Tibial artery (tissue), 4 donors: ENCODE measurements at regions of chr6 and their contacts with region 1.

Region 1: GRCh38 chr6:43013843-43014433 is at the starts of genes KLHDC3 and MEA1:
- DNase-seq: peak; percentile 99 to 100
- H3K4me3 ChIP-seq: peak within 1 kb of the TSS; percentile 71 to 83
- H3K27ac ChIP-seq: peak within 1 kb of the TSS; percentile 86 to 89
- H3K4me1 ChIP-seq: peaks cover 0 to 49% (median 41%) of the 10 kb centered on the region in 4 donors
- H3K27me3 ChIP-seq: no peaks in the 10 kb centered on the region
- CTCF ChIP-seq: no peak

Region 2: GRCh38 chr6:42928986-42929820 is 84.7 kb before region 1 on chr6 and contains the start of gene CNPY3:
- intact Hi-C with region 1: loop called (anchors 5 kb)
- DNase-seq: peak; percentile 95 to 97
- H3K4me3 ChIP-seq: peak within 1 kb of the TSS; percentile 81 to 88
- H3K27ac ChIP-seq: peak within 1 kb of the TSS; percentile 80 to 88
- H3K4me1 ChIP-seq: peaks cover 0 to 36% (median 21%) of the 10 kb centered on the region in 4 donors
- H3K27me3 ChIP-seq: peaks cover 0 to 11% of the 10 kb centered on the region in 2 donors
- CTCF ChIP-seq: peak in 1 of 2 experiments; percentile 28

Region 3: GRCh38 chr6:43053545-43054205 is 39.7 kb after region 1 on chr6 and contains the start of gene CUL7:
- intact Hi-C with region 1: loop called (anchors 5 kb)
- DNase-seq: peak; percentile 93 to 96
- H3K4me3 ChIP-seq: peak within 1 kb of the TSS; percentile 64
- H3K27ac ChIP-seq: peak within 1 kb of the TSS; percentile 86 to 95
- H3K4me1 ChIP-seq: peaks cover 3 to 31% (median 18%) of the 10 kb centered on the region in 4 donors
- H3K27me3 ChIP-seq: no peaks in the 10 kb centered on the region
- CTCF ChIP-seq: no peak

Region 4: DNA sequence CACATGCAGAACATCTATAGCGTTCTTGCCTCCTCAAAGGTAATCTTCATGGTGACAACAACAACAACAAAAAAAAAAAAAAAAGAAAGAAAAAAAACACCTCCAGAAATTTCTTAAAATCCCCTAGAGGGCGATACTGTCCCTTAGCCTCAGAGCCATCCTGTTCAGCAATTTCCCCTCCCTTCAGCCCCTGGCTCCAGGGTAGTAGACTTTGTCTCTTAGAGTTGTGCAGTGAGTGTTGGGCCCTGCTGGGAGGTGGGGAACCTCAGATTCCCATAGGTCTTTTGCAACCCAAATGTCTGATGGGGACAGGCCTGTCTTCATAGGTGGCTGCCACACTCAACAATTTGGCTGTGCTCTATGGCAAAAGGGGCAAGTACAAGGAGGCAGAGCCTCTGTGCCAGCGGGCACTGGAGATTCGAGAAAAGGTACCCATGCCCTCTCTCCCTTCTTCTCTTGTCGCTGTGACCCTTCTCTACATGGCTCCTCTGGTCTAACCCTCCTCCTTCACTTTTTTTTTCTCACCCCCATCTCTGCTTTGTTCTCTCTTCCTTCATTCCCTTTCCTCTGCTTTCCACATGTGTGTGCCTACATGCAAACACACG is 56.2 kb after region 1 on chr6:
- intact Hi-C with region 1: no loop called
- DNase-seq: no peak
- H3K4me3 ChIP-seq: no peak overlapping the region
- H3K27ac ChIP-seq: no peak overlapping the region
- H3K4me1 ChIP-seq: peaks cover 0 to under 1% (median 0%) of the 10 kb centered on the region in 4 donors
- H3K27me3 ChIP-seq: peaks cover 0 to under 1% of the 10 kb centered on the region in 2 donors
- CTCF ChIP-seq: peak in 1 of 2 experiments; percentile 20

Region 5: GRCh38 chr6:43120944-43121913 is 107.3 kb after region 1 on chr6:
- intact Hi-C with region 1: loop called (anchors 5 kb)
- DNase-seq: peak; percentile 88 to 95
- H3K4me3 ChIP-seq: no peak overlapping the region
- H3K27ac ChIP-seq: peak overlapping the region; percentile 75
- H3K4me1 ChIP-seq: peaks cover 0 to 36% (median 25%) of the 10 kb centered on the region in 4 donors
- H3K27me3 ChIP-seq: no peaks in the 10 kb centered on the region
- CTCF ChIP-seq: no peak